ENCODE measurements at regions of chr11 and their contacts with region 1.

Region 1: GRCh38 chr11:3753110-3753509 is 44.2 kb downstream of the NUP98 start:
- DNase-seq: no peak
- H3K4me3 ChIP-seq: no peak overlapping the region
- H3K27ac ChIP-seq: no peak overlapping the region
- H3K4me1 ChIP-seq: no peaks in the 10 kb centered on the region
- H3K27me3 ChIP-seq: no peaks in the 10 kb centered on the region
- CTCF ChIP-seq: no peak

Region 2: DNA sequence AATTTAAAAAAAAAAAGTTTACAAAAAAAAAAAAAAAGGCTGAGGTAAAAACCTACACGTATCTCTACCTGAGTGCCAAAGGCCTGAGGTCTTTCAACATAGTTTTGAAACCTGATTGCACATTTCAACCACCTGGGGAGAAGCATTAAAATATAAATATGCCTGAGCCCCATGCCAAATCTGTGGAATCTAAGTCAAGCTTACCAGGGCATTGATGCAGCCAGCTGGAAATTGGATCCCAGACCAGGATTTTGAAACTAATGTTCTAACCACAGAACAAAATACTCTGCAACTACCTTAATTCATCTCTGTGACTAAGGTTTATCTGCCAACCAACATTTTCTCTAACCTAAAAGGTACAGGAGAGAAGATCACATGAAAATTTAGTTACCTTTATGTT is 43.1 kb before region 1 on chr11:
- intact Hi-C with region 1: loop called (anchors 10 kb)
- DNase-seq: no peak
- H3K4me3 ChIP-seq: no peak overlapping the region
- H3K27ac ChIP-seq: no peak overlapping the region
- H3K4me1 ChIP-seq: no peaks in the 10 kb centered on the region
- H3K27me3 ChIP-seq: no peaks in the 10 kb centered on the region
- CTCF ChIP-seq: no peak